H1 (cell line): ENCODE measurements at regions of chr14 and their contacts with region 1.

Region 1: GRCh38 chr14:103292426-103293374 is 41.3 kb upstream of the EIF5 start:
- DNase-seq: peak in 1 of 2 experiments; percentile 92
- H3K4me3 ChIP-seq: no peak overlapping the region
- H3K27ac ChIP-seq: no peak overlapping the region
- H3K4me1 ChIP-seq: peaks cover 0 to under 1% (median under 1%) of the 10 kb centered on the region in 4 experiments; a peak in 2 of 7 replicates
- H3K27me3 ChIP-seq: no peaks in the 10 kb centered on the region; a peak in 1 of 7 replicates
- CTCF ChIP-seq: peak; percentile 93 to 97 (median 93)
- EP300 ChIP-seq: no peak
- POLR2A ChIP-seq: no peak
- RAD21 ChIP-seq: peak; percentile 96 to 98

Region 2: DNA sequence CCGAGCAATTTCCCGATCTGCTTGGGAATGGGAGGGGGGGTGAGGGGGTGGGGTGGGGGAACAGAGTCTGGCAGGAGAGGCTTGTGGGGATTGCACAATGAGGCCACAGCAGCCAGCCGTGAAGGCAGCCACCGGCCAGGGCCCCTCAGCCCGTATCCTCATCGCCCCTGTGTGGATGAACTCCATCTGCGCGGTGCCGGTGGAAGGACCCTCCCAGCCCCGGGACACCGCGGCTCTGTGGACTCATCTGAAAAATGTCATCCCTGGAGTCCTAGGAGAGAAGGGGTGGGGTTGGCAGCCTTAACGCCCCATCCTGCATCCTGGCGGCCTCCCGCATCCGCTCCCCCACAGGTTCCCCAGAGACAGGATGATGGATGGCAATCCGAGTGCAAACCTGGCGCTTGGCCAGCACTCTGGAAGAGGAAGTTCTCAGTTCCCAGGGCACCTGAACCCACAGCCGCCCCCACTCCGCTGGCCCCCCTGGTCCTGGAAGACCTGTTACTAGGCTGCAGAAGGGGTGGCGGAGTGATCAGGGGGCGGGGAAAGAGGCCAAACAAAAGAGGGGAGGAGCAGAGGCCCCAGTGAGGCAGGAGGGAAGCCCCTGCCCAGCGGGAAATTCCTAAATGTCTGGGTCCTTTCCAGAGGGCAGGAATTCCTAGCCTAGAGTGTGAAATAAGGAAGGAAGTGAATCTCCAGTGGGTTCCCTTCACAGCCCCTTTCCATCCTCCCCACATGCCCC is 170.7 kb before region 1 on chr14:
- CTCF ChIA-PET with region 1: interaction called, 11 read pairs
- POLR2A ChIA-PET with region 1: no interaction called
- DNase-seq: peak in 1 of 2 experiments; percentile 80
- H3K4me3 ChIP-seq: peak overlapping the region in 3 of 4 experiments; percentile 21 to 62 (median 32); a peak in 5 of 8 replicates
- H3K27ac ChIP-seq: no peak overlapping the region
- H3K4me1 ChIP-seq: peaks cover 0 to 35% (median 25%) of the 10 kb centered on the region in 4 experiments; a peak in 6 of 7 replicates
- H3K27me3 ChIP-seq: peaks cover 0 to 36% (median 26%) of the 10 kb centered on the region in 4 experiments; a peak in 6 of 7 replicates
- CTCF ChIP-seq: no peak
- EP300 ChIP-seq: no peak
- POLR2A ChIP-seq: no peak
- RAD21 ChIP-seq: no peak

Region 3: GRCh38 chr14:103141119-103141796 is 151.4 kb before region 1 on chr14:
- CTCF ChIA-PET with region 1: interaction called, 29 read pairs
- POLR2A ChIA-PET with region 1: no interaction called
- DNase-seq: peak; percentile 65 to 89
- H3K4me3 ChIP-seq: no peak overlapping the region
- H3K27ac ChIP-seq: no peak overlapping the region
- H3K4me1 ChIP-seq: peaks cover 0 to 11% (median 6%) of the 10 kb centered on the region in 4 experiments; a peak in 6 of 7 replicates
- H3K27me3 ChIP-seq: peaks cover 0 to 23% (median 11%) of the 10 kb centered on the region in 4 experiments; a peak in 6 of 7 replicates
- CTCF ChIP-seq: peak in 2 of 3 experiments; percentile 91 to 96; a peak in 3 of 4 replicates
- EP300 ChIP-seq: no peak
- POLR2A ChIP-seq: no peak
- RAD21 ChIP-seq: peak; percentile 46 to 73

Region 4: DNA sequence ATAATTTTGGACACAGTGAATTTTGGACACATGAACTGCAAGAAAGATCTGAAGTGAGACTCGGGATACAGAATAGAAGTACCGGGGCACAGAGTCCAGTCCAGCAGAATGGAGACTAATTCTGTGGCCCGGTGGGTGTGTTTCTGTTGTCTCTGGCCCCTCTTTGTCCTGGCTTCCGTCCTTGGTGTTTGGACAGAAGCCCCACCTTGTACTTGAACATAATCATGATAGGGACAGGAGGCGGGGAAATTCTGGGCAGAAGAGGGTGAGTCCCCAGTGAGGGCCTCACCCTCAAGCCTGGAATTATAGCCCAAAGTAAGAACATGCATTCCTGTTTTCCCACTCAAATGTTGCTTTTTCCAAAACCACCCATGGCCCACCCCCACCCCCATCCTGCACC is 129.5 kb before region 1 on chr14:
- CTCF ChIA-PET with region 1: no interaction called
- POLR2A ChIA-PET with region 1: no interaction called
- DNase-seq: no peak
- H3K4me3 ChIP-seq: no peak overlapping the region
- H3K27ac ChIP-seq: no peak overlapping the region
- H3K4me1 ChIP-seq: no peaks in the 10 kb centered on the region; a peak in 1 of 7 replicates
- H3K27me3 ChIP-seq: no peaks in the 10 kb centered on the region
- CTCF ChIP-seq: no peak
- EP300 ChIP-seq: no peak
- POLR2A ChIP-seq: no peak
- RAD21 ChIP-seq: no peak

Region 5: GRCh38 chr14:103216399-103216798 is 76.3 kb before region 1 on chr14:
- CTCF ChIA-PET with region 1: interaction called, 13 read pairs
- POLR2A ChIA-PET with region 1: no interaction called
- DNase-seq: no peak
- H3K4me3 ChIP-seq: no peak overlapping the region
- H3K27ac ChIP-seq: no peak overlapping the region
- H3K4me1 ChIP-seq: peaks cover 0 to 8% (median 1%) of the 10 kb centered on the region in 4 experiments; a peak in 5 of 7 replicates
- H3K27me3 ChIP-seq: peaks cover 8 to 22% (median 19%) of the 10 kb centered on the region in 4 experiments
- CTCF ChIP-seq: no peak
- EP300 ChIP-seq: no peak
- POLR2A ChIP-seq: no peak
- RAD21 ChIP-seq: no peak

Region 6: DNA sequence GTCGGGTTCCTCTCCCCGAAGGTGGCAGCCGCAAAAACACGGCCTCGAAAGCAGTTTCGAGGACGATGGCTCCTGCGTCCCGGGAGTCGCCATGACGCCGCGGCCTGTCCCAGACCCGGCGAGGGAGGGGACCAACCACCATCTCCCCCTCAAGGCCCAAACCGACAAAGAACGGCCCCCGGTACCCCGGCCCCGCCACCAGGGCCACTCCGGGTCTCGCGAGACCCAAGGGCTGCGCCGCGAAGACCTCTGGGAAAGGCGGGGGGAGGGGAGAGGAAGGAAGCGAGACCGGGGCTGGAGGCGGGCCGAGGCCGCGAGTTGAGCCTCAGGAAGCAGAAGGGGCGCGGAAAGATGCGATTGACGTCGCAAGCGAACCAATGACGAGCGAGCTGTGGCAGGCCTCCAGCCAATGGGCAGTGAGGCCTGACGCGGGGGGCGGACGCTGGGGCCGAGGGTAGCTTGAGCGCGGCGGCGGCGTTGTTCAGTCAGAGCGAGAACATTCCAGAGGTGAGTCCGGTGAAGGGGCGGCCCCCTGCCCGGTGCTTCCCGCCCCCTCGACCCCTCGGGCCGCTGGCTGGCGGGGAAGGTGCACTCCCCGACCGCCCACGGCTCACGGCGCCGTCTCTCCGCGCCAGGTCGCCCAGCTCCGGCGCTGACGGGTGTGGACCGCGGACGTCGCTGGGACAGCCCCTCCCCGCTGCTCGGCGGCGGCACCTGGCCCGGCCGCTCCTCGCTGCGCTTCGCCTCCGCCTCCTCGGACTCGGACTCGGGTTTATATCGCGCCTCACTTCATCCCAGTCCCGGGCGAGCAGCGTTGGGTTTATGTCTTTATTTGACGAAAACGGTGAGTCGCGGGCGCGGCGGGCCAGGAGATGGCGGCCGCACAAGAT is 41.3 kb after region 1 on chr14 and contains the start of gene EIF5:
- CTCF ChIA-PET with region 1: interaction called, 4 read pairs
- POLR2A ChIA-PET with region 1: interaction called, 22 read pairs
- DNase-seq: peak; percentile 95 to 98
- H3K4me3 ChIP-seq: peak within 1 kb of the TSS; percentile 90 to 93 (median 92)
- H3K27ac ChIP-seq: peak within 1 kb of the TSS; percentile 98
- H3K4me1 ChIP-seq: peaks cover 0 to 8% (median 4%) of the 10 kb centered on the region in 4 experiments; a peak in 4 of 7 replicates
- H3K27me3 ChIP-seq: no peaks in the 10 kb centered on the region
- CTCF ChIP-seq: no peak
- EP300 ChIP-seq: no peak
- POLR2A ChIP-seq: peak; percentile 98 to 100
- RAD21 ChIP-seq: no peak; a peak in 1 of 4 replicates
- total RNA-seq, gene EIF5: 323 and 328 TPM in 2 replicates

Region 7: DNA sequence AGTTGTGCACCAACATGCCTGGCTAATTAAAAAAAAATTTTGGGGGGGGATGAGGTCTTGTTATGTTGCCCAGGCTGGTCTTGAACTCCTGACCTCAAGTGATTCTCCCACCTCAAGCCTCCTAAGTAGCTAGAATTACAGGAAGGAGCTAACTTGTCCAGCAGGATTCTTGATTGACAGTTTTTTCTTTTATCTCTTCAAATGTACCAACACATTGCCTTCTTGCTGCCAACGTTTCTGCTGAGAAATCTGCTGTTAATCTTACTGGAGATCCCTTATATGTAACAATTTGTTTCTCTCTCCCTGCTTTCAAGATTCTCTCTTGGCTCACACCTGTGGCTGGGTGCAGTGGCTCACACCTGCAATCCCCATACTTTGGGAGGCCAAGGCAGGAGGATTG is 70.1 kb after region 1 on chr14:
- CTCF ChIA-PET with region 1: no interaction called
- POLR2A ChIA-PET with region 1: no interaction called
- DNase-seq: no peak
- H3K4me3 ChIP-seq: no peak overlapping the region
- H3K27ac ChIP-seq: no peak overlapping the region
- H3K4me1 ChIP-seq: no peaks in the 10 kb centered on the region
- H3K27me3 ChIP-seq: no peaks in the 10 kb centered on the region
- CTCF ChIP-seq: no peak
- EP300 ChIP-seq: no peak
- POLR2A ChIP-seq: no peak
- RAD21 ChIP-seq: no peak